ENCODE measurements at regions of chr15 and their contacts with region 1.

Region 1: DNA sequence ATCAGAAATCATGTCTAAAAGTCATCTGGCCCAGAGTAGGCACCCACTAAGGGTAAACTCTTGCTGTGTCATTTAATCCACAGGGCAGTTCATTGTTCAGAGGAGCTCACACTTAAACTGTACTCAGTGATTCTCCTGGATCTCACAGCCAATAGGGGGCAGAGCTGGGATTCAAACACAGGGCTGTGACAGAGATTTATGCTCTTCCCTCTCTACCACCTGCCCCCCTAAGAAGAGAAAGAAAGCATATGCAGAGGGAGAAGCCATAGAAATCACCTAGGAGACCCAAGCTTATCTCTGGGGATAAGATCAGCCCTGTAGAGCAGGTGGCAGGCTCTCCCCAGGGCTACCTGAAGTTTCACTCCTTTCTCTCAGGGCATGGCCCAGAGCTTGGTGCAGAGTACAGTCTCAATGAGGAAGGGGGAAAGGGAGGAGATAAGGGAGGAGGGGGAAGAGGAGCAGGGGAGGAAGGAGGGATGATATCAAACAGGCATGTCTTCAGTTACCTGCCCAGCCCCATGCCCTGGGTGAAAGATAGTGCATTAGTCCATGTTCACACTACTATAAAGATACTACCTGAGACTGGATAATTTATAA is 51.8 kb upstream of the ADPGK start:
- DNase-seq: no peak
- H3K4me3 ChIP-seq: no peak overlapping the region
- H3K27ac ChIP-seq: no peak overlapping the region
- H3K4me1 ChIP-seq: peaks cover 0 to 5% of the 10 kb centered on the region in 2 donors
- H3K27me3 ChIP-seq: no peaks in the 10 kb centered on the region
- CTCF ChIP-seq: no peak

Region 2: GRCh38 chr15:72902245-72902918 is 67.0 kb after region 1 on chr15:
- intact Hi-C with region 1: loop called (anchors 5 kb)
- DNase-seq: peak; percentile 14 to 89
- H3K4me3 ChIP-seq: peak overlapping the region in 1 of 2 donors; percentile 29
- H3K27ac ChIP-seq: peak overlapping the region; percentile 62 to 72
- H3K4me1 ChIP-seq: peaks cover 5 to 29% of the 10 kb centered on the region in 2 donors
- H3K27me3 ChIP-seq: no peaks in the 10 kb centered on the region
- CTCF ChIP-seq: no peak